K562 (cell line): ENCODE measurements at regions of chr5 and their contacts with region 1.

Region 1: GRCh38 chr5:164013077-164013670 is 507.8 kb downstream of the MAT2B start:
- DNase-seq: peak; percentile 37 to 80 (median 42)
- ATAC-seq: peak; percentile 82
- H3K4me3 ChIP-seq: no peak overlapping the region
- H3K27ac ChIP-seq: no peak overlapping the region
- H3K4me1 ChIP-seq: no peaks in the 10 kb centered on the region
- H3K27me3 ChIP-seq: no peaks in the 10 kb centered on the region
- CTCF ChIP-seq: peak; percentile 57 to 77 (median 68)
- EP300 ChIP-seq: no peak
- POLR2A ChIP-seq: no peak
- RAD21 ChIP-seq: peak; percentile 93 to 94

Region 2: DNA sequence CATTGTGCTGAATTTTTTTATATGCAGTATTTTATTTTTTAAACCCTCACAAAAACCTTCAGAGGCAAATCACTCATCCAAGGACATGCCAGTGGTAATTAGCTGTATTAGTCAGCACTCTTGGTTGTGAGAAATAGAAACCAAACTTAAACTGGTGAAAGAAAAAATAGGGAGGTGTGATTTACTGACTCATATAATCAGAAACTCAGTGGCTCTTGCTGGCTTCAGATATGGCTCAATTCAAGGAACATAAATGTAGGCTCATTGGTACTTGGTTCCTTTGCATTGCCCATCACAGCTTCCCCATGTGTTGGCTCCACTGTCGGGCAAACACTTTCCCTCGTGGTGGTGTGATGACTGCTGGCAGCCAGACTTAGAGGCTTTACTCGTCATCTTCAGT is 10.5 kb before region 1 on chr5:
- CTCF ChIA-PET with region 1: no interaction called
- POLR2A ChIA-PET with region 1: no interaction called
- in situ Hi-C with region 1: no loop called
- intact Hi-C with region 1: no loop called
- DNase-seq: no peak
- ATAC-seq: no peak
- H3K4me3 ChIP-seq: no peak overlapping the region
- H3K27ac ChIP-seq: no peak overlapping the region
- H3K4me1 ChIP-seq: no peaks in the 10 kb centered on the region
- H3K27me3 ChIP-seq: no peaks in the 10 kb centered on the region
- CTCF ChIP-seq: no peak
- EP300 ChIP-seq: no peak
- POLR2A ChIP-seq: no peak
- RAD21 ChIP-seq: no peak

Region 3: GRCh38 chr5:164353155-164353554 is 340.0 kb after region 1 on chr5:
- CTCF ChIA-PET with region 1: no interaction called
- POLR2A ChIA-PET with region 1: no interaction called
- in situ Hi-C with region 1: no loop called
- intact Hi-C with region 1: loop called (anchors 5 kb)
- DNase-seq: no peak
- ATAC-seq: no peak
- H3K4me3 ChIP-seq: no peak overlapping the region
- H3K27ac ChIP-seq: peak overlapping the region; percentile 75; the same call in 2 of the 3 replicates
- H3K4me1 ChIP-seq: peaks cover 15 to 54% of the 10 kb centered on the region in 2 experiments
- H3K27me3 ChIP-seq: no peaks in the 10 kb centered on the region
- CTCF ChIP-seq: no peak
- EP300 ChIP-seq: peak; percentile 40; the same call in 1 of the 2 replicates
- POLR2A ChIP-seq: no peak
- RAD21 ChIP-seq: no peak

Region 4: DNA sequence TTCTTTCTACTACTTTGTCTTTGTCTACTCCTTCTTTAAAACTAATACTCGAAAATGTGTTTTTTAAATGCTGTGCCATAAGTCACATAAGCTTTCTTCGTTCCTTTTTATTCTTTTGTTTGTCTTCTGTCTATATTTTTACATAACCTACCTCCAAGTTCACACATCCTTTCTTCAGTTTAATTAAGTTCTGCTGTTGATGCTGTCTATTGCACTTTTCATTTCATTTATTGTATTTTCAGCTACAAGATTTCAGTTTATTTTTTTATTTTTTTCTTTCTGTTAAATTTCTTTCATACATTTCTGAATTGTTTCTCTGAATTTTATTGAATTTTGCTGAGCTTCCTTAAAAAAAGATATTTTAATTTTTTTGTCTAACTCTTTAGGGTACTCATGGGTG is 370.5 kb after region 1 on chr5:
- CTCF ChIA-PET with region 1: no interaction called
- POLR2A ChIA-PET with region 1: no interaction called
- in situ Hi-C with region 1: no loop called
- intact Hi-C with region 1: no loop called
- DNase-seq: no peak
- ATAC-seq: no peak
- H3K4me3 ChIP-seq: no peak overlapping the region
- H3K27ac ChIP-seq: no peak overlapping the region
- H3K4me1 ChIP-seq: no peaks in the 10 kb centered on the region
- H3K27me3 ChIP-seq: no peaks in the 10 kb centered on the region
- CTCF ChIP-seq: no peak
- EP300 ChIP-seq: no peak
- POLR2A ChIP-seq: no peak
- RAD21 ChIP-seq: no peak

Region 5: DNA sequence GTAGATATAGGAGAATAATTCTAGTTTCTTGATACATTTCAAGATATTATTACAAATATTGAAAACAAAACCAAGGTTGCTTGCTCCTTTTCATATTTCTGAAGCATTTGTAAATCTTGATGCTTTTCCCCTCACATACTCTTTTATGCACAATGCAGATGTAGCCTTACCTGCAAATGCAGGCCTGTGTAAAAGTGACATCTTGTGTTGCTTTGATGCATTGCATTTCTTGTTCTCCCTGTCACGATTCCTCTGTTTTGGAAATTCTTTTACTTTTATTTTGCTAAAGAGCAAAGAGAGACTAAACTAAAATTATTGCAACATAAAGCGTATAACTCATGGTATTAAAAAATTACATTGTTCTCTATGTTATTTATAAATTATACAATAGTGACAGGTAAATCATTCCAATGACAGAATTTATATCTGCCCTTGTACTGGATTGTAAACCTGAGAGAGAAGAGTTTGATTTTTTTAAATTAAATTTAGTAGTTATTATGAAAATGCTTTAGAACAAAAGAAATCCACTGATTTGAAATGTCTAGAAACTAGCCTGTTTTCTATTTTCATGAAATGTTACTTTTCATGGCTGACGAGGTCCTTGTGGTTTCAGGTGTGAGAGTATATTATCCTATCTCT is 462.3 kb after region 1 on chr5:
- CTCF ChIA-PET with region 1: no interaction called
- POLR2A ChIA-PET with region 1: no interaction called
- in situ Hi-C with region 1: no loop called
- intact Hi-C with region 1: loop called (anchors 1 kb)
- DNase-seq: peak in 2 of 4 experiments; percentile 18 to 52
- ATAC-seq: peak; percentile 84
- H3K4me3 ChIP-seq: no peak overlapping the region
- H3K27ac ChIP-seq: no peak overlapping the region
- H3K4me1 ChIP-seq: no peaks in the 10 kb centered on the region
- H3K27me3 ChIP-seq: no peaks in the 10 kb centered on the region
- CTCF ChIP-seq: peak; percentile 47 to 85 (median 61); a peak in 5 of 6 replicates
- EP300 ChIP-seq: no peak
- POLR2A ChIP-seq: no peak
- RAD21 ChIP-seq: peak; percentile 93 to 94

Region 6: DNA sequence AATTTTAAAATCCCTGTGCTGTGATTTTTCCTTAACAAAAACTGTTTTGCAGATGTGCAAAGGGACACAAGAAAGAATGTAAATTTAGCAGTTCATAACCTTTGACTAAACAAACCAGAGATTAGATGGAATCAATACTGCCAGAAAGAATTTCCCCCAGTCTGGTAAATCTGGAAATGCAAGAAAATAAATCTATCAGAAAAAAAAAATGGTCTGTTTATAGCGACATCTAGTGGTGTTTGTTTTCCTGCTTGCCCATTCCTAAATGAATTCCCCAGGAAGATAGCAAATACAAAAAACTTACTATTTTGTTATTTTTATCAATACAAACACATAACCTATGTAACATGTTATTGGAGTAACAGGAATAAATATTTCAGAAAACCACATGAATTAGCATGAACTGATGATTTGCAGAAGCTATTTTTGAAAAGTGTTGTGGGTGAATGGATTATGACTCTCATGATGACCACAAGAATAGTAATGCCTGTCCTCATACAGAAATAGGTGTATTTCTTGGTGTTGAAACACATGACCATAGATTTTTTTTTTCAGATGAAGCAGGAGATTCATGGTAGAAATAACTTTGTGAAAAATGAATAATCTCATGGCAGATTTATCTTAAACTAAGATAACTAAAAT is 1196.0 kb after region 1 on chr5:
- CTCF ChIA-PET with region 1: no interaction called
- POLR2A ChIA-PET with region 1: no interaction called
- in situ Hi-C with region 1: no loop called
- intact Hi-C with region 1: loop called (anchors 2 kb)
- DNase-seq: peak in 1 of 4 experiments; percentile 8
- ATAC-seq: no peak
- H3K4me3 ChIP-seq: no peak overlapping the region
- H3K27ac ChIP-seq: no peak overlapping the region
- H3K4me1 ChIP-seq: no peaks in the 10 kb centered on the region
- H3K27me3 ChIP-seq: no peaks in the 10 kb centered on the region
- CTCF ChIP-seq: peak in 1 of 3 experiments; percentile 47; a peak in 3 of 6 replicates
- EP300 ChIP-seq: no peak
- POLR2A ChIP-seq: no peak
- RAD21 ChIP-seq: peak in 1 of 2 experiments; percentile 44; a peak in 2 of 4 replicates

Region 7: GRCh38 chr5:165375201-165375600 is 1362.0 kb after region 1 on chr5:
- CTCF ChIA-PET with region 1: no interaction called
- POLR2A ChIA-PET with region 1: no interaction called
- in situ Hi-C with region 1: no loop called
- intact Hi-C with region 1: no loop called
- DNase-seq: no peak
- ATAC-seq: no peak
- H3K4me3 ChIP-seq: no peak overlapping the region
- H3K27ac ChIP-seq: no peak overlapping the region
- H3K4me1 ChIP-seq: no peaks in the 10 kb centered on the region
- H3K27me3 ChIP-seq: no peaks in the 10 kb centered on the region
- CTCF ChIP-seq: no peak
- EP300 ChIP-seq: no peak
- POLR2A ChIP-seq: no peak
- RAD21 ChIP-seq: no peak